GM12878 (cell line): ENCODE measurements at regions of chr11 and their contacts with region 1.

Region 1: DNA sequence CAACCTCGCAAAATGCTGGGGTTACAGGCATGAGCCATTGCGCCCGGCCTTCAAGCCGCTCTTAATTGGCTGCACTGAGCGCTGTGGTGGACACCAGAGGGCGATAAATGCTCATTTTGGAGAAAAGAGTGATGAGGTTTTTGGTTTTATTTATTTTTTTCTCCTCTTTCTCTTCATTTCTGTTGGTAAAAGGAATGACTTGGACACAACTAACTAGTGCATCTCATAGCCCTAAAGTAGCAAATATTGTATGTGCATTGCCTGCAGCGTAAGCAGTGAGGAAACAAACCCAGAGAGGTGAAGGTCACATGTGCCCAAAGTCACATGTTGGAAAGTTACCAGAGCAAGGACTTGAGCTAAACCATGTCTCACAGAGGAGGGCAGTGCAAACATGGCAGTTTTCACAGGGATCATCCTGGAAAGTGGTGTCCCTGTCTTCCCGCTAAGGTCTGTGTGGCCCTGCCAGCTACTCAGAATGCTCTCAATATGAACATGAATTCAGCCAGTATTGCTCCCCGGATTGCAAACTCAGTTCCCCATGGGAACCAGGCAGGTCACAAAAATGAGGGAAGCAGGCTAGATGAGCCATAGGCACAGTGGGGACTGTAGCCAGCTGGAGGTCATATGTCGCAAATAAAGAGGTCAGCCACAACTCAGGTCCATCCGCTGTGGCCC is 8.6 kb upstream of the CD82 start:
- DNase-seq: peak; percentile 47
- ATAC-seq: peak; percentile 63
- H3K4me3 ChIP-seq: no peak overlapping the region
- H3K27ac ChIP-seq: no peak overlapping the region
- H3K4me1 ChIP-seq: peaks cover 27% of the 10 kb centered on the region
- H3K27me3 ChIP-seq: no peaks in the 10 kb centered on the region
- CTCF ChIP-seq: peak; percentile 62 to 71 (median 70)
- EP300 ChIP-seq: no peak
- POLR2A ChIP-seq: no peak
- RAD21 ChIP-seq: peak; percentile 93

Region 2: GRCh38 chr11:44574610-44575287 is 17.9 kb after region 1 on chr11:
- CTCF ChIA-PET with region 1: interaction called, 109 read pairs
- POLR2A ChIA-PET with region 1: interaction called, 23 read pairs
- RAD21 ChIA-PET with region 1: interaction called, 29 read pairs
- SMC1A ChIA-PET with region 1: interaction called, 98 read pairs
- in situ Hi-C with region 1: no loop called
- intact Hi-C with region 1: no loop called
- DNase-seq: peak; percentile 66
- ATAC-seq: peak; percentile 66
- H3K4me3 ChIP-seq: peak overlapping the region; percentile 38; the same call in 1 of the 2 replicates
- H3K27ac ChIP-seq: peak overlapping the region; percentile 88
- H3K4me1 ChIP-seq: peaks cover 63% of the 10 kb centered on the region
- H3K27me3 ChIP-seq: no peaks in the 10 kb centered on the region
- CTCF ChIP-seq: no peak
- EP300 ChIP-seq: peak; percentile 23 to 37; a peak in 1 of 4 replicates
- POLR2A ChIP-seq: no peak
- RAD21 ChIP-seq: no peak

Region 3: DNA sequence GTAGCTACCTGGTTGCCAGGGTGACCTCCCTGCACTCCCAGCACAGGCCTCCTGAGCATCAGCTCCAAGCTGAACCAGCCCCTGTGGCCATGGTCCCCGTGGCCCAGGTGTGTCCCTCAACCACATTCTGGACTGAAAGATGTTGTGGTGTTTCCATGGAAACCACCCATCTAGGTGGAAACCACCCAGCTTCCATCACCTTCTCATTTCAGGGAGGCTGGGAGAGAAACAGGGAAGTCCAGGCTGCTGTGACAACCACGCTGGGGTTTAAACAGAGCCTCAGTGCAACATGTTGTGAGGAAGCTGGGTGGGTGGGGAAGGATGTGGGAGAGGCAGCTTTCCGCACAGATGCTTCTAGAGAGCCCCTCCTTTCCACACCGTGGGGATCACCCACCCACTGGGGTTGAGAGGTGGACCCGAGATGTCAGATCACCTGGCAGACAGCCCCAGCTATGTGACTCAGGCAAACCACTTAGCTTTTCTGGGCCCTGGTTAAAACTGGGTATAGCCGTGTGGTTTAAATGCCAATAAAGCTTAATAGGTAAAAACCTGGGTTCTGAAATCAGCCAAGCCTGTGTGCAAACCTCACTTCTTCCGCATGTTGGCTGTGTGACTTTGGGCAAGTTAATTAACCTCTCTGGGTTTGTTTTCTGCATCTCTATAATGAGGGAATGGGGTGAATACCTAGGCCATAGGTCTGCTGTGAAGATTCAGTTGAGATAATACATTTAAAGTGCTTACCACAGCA is 55.0 kb after region 1 on chr11:
- CTCF ChIA-PET with region 1: interaction called, 477 read pairs
- POLR2A ChIA-PET with region 1: interaction called, 434 read pairs
- RAD21 ChIA-PET with region 1: interaction called, 190 read pairs
- SMC1A ChIA-PET with region 1: interaction called, 433 read pairs
- in situ Hi-C with region 1: no loop called
- intact Hi-C with region 1: loop called (anchors 1 kb)
- DNase-seq: peak; percentile 86
- ATAC-seq: peak; percentile 54
- H3K4me3 ChIP-seq: no peak overlapping the region
- H3K27ac ChIP-seq: peak overlapping the region; percentile 52
- H3K4me1 ChIP-seq: peaks cover 74% of the 10 kb centered on the region
- H3K27me3 ChIP-seq: no peaks in the 10 kb centered on the region
- CTCF ChIP-seq: no peak
- EP300 ChIP-seq: peak in 1 of 2 experiments; percentile 38; a peak in 2 of 4 replicates
- POLR2A ChIP-seq: no peak
- RAD21 ChIP-seq: no peak

Region 4: GRCh38 chr11:44634401-44635281 is 77.8 kb after region 1 on chr11:
- CTCF ChIA-PET with region 1: interaction called, 93 read pairs
- POLR2A ChIA-PET with region 1: no interaction called
- RAD21 ChIA-PET with region 1: interaction called, 21 read pairs
- SMC1A ChIA-PET with region 1: interaction called, 19 read pairs
- in situ Hi-C with region 1: no loop called
- intact Hi-C with region 1: loop called (anchors 1 kb)
- DNase-seq: no peak
- ATAC-seq: peak; percentile 37
- H3K4me3 ChIP-seq: no peak overlapping the region
- H3K27ac ChIP-seq: no peak overlapping the region
- H3K4me1 ChIP-seq: no peaks in the 10 kb centered on the region
- H3K27me3 ChIP-seq: no peaks in the 10 kb centered on the region
- CTCF ChIP-seq: no peak
- EP300 ChIP-seq: no peak
- POLR2A ChIP-seq: no peak
- RAD21 ChIP-seq: no peak

Region 5: DNA sequence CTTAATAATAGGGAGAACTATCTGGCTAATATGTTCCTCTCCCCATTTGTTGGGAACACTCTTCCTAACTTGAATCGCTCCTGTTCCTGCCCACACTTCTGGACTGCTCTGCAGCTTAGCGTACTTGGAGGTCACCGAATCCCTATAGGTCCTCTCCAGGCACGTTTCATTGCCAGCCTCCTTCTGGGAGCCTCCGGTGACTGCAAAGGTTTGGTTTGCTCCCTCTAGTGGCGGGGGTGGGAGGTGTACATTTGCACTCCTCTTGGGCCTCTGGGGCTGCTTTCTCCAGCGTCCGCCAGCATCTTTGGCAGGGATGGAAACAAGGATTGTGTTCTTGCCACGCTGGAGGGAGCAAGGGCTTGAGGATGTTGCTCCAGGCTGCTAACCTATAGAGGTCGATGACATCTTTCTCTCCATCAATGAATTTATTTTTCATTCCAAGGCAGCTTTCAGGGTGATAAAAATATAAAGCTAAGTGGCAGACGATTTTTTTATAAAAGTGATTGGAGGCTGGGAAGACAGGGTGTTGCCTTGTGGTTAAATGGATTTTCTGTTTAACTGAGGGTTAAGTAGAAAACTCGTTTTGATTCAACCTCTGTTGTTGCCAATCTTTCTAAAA is 218.6 kb after region 1 on chr11:
- CTCF ChIA-PET with region 1: interaction called, 38 read pairs
- POLR2A ChIA-PET with region 1: no interaction called
- RAD21 ChIA-PET with region 1: interaction called, 13 read pairs
- SMC1A ChIA-PET with region 1: interaction called, 5 read pairs
- in situ Hi-C with region 1: loop called (anchors 10 kb)
- intact Hi-C with region 1: loop called (anchors 5 kb)
- DNase-seq: no peak
- ATAC-seq: peak; percentile 94
- H3K4me3 ChIP-seq: no peak overlapping the region
- H3K27ac ChIP-seq: no peak overlapping the region
- H3K4me1 ChIP-seq: no peaks in the 10 kb centered on the region
- H3K27me3 ChIP-seq: peaks cover 0 to 1% of the 10 kb centered on the region in 2 experiments; a peak in 1 of 4 replicates
- CTCF ChIP-seq: peak; percentile 70 to 84 (median 77)
- EP300 ChIP-seq: no peak
- POLR2A ChIP-seq: no peak
- RAD21 ChIP-seq: peak; percentile 52

Region 6: DNA sequence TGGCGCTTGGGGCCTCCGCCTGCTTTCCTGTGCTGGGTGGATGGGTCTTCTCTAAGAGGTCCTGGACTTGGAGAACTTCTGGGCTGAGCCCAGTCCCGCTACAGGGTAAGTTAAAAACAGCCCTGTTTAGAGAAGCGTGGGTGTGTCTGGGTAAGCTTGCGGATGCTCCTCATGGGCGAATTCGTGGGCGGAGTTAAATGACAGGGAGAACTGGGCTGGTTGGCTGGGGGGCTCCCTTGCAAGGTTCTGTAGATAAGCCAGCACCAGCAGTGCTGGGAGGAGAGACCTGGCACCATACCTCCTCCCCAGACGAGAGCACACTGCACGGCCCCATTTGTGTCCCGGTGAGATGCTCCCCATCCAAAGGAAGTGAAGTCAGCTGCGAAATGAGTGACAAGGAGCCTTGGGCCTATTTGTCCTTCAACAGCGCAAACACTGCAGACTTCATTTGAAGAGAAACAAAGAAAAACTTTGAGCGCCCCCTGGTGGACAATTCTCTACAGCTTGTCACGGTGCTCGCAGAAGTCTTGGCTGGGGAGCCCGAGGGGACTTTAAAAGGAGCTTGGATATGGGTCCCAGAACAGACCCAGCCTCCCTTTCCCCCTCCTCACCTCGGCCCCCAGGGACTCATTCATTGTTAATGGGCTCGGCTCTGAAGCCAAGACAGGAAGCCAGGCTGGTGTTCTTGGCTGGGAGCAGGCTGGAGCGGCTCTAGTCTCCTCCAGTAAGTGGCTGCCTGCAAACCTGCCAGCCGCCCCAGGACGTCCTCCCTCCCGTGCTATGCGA is 354.4 kb after region 1 on chr11:
- CTCF ChIA-PET with region 1: interaction called, 21 read pairs
- POLR2A ChIA-PET with region 1: no interaction called
- RAD21 ChIA-PET with region 1: interaction called, 9 read pairs
- SMC1A ChIA-PET with region 1: interaction called, 7 read pairs
- in situ Hi-C with region 1: loop called (anchors 5 kb)
- intact Hi-C with region 1: loop called (anchors 1 kb)
- DNase-seq: no peak
- ATAC-seq: peak; percentile 95
- H3K4me3 ChIP-seq: no peak overlapping the region
- H3K27ac ChIP-seq: no peak overlapping the region
- H3K4me1 ChIP-seq: peaks cover 4% of the 10 kb centered on the region
- H3K27me3 ChIP-seq: no peaks in the 10 kb centered on the region; a peak in 1 of 4 replicates
- CTCF ChIP-seq: peak; percentile 68 to 77 (median 76)
- EP300 ChIP-seq: no peak
- POLR2A ChIP-seq: no peak
- RAD21 ChIP-seq: peak; percentile 83